Aorta (tissue), 5 donors: ENCODE measurements at regions of chr11 and their contacts with region 1.

Region 1: DNA sequence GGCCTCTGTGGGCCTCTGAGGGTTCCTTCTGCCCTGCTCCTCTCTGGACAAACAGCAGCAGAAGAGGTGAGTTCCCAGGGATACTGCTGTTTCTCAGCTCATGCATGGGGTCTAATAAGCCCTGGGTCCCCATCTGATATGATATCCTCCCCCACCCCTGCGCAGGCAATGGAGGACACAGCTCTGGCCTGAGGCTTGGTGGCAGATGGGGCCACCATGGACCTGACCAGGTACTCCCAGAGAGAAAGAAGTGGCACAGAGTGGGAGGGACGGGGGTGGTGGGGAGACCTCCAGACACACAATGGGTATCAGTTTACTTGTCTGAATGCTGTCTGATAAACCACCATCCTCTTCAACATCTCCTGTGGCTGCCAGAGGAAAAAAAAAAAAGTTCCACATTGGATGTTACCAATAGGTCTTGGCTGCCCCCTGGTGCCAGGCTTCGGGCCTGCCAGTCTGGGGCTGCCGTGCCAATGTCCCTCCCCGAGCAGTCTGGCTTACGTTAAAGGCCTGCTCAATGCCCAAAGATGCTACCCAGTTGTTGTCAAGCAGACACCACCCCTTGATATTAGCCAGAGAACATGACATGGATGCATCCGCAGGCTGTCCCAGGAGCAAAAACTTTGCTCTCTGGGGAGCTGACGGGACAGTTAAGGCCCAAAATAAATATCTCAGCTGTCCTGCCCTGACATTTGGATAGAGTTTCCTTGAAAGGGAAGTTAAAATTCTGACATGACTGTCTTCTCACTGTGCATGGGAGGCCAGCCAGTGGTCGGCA is 27.9 kb upstream of the ABCC8 start:
- DNase-seq: peak; percentile 88 to 96
- ATAC-seq: peak; percentile 82
- H3K4me3 ChIP-seq: no peak overlapping the region
- H3K27ac ChIP-seq: no peak overlapping the region
- H3K4me1 ChIP-seq: peaks cover 0 to 6% of the 10 kb centered on the region in 2 donors
- H3K27me3 ChIP-seq: no peaks in the 10 kb centered on the region

Region 2: GRCh38 chr11:17221968-17222367 is 282.6 kb before region 1 on chr11:
- intact Hi-C with region 1: loop called in 1 of 2 experiments (anchors 10 kb)
- DNase-seq: no peak
- ATAC-seq: no peak
- H3K4me3 ChIP-seq: no peak overlapping the region
- H3K27ac ChIP-seq: no peak overlapping the region
- H3K4me1 ChIP-seq: no peaks in the 10 kb centered on the region
- H3K27me3 ChIP-seq: no peaks in the 10 kb centered on the region

Region 3: DNA sequence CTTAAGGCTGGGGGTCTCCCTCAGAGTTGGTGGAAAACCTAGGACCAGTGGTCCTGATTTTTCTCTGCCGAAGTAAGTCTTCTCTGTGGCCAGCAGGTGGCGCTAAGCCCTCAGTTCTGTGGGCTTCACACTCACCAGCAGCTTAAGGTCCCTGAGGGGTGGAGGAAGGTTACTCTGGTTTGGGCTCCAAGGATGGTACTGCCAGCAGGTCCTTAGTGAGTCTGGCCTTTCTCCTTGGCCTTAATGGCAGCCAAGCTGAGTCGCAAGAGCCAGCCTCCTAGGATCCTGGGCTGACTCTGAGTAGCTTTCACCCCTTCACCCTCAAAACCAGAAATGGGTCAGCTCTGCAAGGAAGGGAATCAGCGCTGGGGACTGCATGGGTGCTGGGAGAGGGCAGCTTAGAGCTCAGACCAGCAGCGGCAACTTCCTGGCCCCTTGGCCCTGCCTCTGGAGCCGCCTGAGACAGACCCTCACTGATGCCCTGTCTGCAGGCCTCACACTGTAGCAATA is 120.5 kb before region 1 on chr11:
- intact Hi-C with region 1: loop called (anchors 1 kb)
- DNase-seq: peak; percentile 89 to 94
- ATAC-seq: peak; percentile 83
- H3K4me3 ChIP-seq: no peak overlapping the region
- H3K27ac ChIP-seq: no peak overlapping the region
- H3K4me1 ChIP-seq: no peaks in the 10 kb centered on the region
- H3K27me3 ChIP-seq: no peaks in the 10 kb centered on the region